Endothelial cell of umbilical vein (primary cell): ENCODE measurements at regions of chr15 and their contacts with region 1.

Region 1: GRCh38 chr15:40857601-40858341 is 13.9 kb downstream of the SPINT1 start:
- DNase-seq: peak; percentile 67
- H3K4me3 ChIP-seq: no peak overlapping the region
- H3K27ac ChIP-seq: no peak overlapping the region
- H3K4me1 ChIP-seq: no peaks in the 10 kb centered on the region
- H3K27me3 ChIP-seq: no peaks in the 10 kb centered on the region
- CTCF ChIP-seq: peak; percentile 92 to 99
- POLR2A ChIP-seq: no peak

Region 2: DNA sequence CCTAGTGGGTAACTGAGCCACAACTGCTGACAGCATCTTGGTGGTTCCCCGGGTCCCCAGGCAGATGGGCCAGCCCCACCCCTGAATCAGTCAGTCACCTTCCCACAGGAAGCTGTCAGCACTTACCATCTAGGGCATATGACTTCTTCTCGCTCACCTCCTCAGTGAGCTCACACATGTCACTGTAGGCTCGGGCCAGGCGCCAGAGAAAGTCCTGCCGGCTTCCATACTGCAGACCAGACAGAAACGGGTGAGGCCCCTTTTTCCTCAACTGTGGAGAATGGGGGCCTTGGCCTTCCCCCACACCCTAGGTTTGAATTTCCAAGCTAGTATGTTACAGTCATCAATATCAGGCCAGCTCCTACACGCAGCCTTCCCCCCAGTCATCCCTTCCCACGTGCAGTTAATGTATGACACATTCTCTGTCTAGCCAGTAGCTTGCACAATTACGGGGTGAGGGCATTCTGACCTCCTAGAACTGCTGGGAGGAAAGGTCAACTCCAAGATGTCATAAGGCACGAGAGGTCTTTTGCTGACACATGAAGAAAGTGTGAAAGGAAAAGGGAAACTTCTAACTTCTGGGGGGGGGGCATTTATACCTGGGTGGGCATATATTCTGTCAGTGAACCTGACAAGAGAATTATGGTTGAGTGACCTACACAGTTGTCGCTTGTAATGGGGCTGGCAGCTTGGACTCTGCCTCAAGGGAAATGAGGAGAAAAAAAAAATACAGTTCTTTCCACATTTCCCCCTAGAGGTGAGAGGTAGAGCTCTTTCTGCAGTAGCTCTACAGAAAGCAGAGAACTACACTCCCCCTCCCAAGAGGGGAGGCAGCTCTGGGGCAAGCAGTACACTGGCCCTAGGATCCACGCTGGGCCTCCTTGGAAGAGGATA is 113.6 kb before region 1 on chr15:
- CTCF ChIA-PET with region 1: interaction called, 27 read pairs
- POLR2A ChIA-PET with region 1: no interaction called
- dilution Hi-C with region 1: no loop called
- intact Hi-C with region 1: no loop called
- DNase-seq: no peak
- H3K4me3 ChIP-seq: no peak overlapping the region
- H3K27ac ChIP-seq: no peak overlapping the region
- H3K4me1 ChIP-seq: no peaks in the 10 kb centered on the region
- H3K27me3 ChIP-seq: no peaks in the 10 kb centered on the region
- CTCF ChIP-seq: no peak
- POLR2A ChIP-seq: no peak

Region 3: GRCh38 chr15:40825661-40826088 is 32.1 kb before region 1 on chr15:
- CTCF ChIA-PET with region 1: interaction called, 15 read pairs
- POLR2A ChIA-PET with region 1: no interaction called
- dilution Hi-C with region 1: no loop called
- intact Hi-C with region 1: no loop called
- DNase-seq: no peak
- H3K4me3 ChIP-seq: no peak overlapping the region
- H3K27ac ChIP-seq: no peak overlapping the region
- H3K4me1 ChIP-seq: no peaks in the 10 kb centered on the region
- H3K27me3 ChIP-seq: peaks cover 7 to 14% of the 10 kb centered on the region in 2 experiments
- CTCF ChIP-seq: no peak
- POLR2A ChIP-seq: no peak

Region 4: GRCh38 chr15:40847205-40847961 is 10.4 kb before region 1 on chr15:
- CTCF ChIA-PET with region 1: interaction called, 71 read pairs
- POLR2A ChIA-PET with region 1: no interaction called
- dilution Hi-C with region 1: no loop called
- intact Hi-C with region 1: no loop called
- DNase-seq: no peak
- H3K4me3 ChIP-seq: no peak overlapping the region
- H3K27ac ChIP-seq: no peak overlapping the region
- H3K4me1 ChIP-seq: peaks cover 5% of the 10 kb centered on the region
- H3K27me3 ChIP-seq: peaks cover 7 to 11% of the 10 kb centered on the region in 2 experiments
- CTCF ChIP-seq: no peak
- POLR2A ChIP-seq: no peak

Region 5: GRCh38 chr15:40881351-40881750 is 23.6 kb after region 1 on chr15:
- CTCF ChIA-PET with region 1: interaction called, 38 read pairs
- POLR2A ChIA-PET with region 1: no interaction called
- dilution Hi-C with region 1: no loop called
- intact Hi-C with region 1: no loop called
- DNase-seq: no peak
- H3K4me3 ChIP-seq: no peak overlapping the region
- H3K27ac ChIP-seq: no peak overlapping the region
- H3K4me1 ChIP-seq: no peaks in the 10 kb centered on the region
- H3K27me3 ChIP-seq: no peaks in the 10 kb centered on the region
- CTCF ChIP-seq: no peak
- POLR2A ChIP-seq: no peak

Region 6: DNA sequence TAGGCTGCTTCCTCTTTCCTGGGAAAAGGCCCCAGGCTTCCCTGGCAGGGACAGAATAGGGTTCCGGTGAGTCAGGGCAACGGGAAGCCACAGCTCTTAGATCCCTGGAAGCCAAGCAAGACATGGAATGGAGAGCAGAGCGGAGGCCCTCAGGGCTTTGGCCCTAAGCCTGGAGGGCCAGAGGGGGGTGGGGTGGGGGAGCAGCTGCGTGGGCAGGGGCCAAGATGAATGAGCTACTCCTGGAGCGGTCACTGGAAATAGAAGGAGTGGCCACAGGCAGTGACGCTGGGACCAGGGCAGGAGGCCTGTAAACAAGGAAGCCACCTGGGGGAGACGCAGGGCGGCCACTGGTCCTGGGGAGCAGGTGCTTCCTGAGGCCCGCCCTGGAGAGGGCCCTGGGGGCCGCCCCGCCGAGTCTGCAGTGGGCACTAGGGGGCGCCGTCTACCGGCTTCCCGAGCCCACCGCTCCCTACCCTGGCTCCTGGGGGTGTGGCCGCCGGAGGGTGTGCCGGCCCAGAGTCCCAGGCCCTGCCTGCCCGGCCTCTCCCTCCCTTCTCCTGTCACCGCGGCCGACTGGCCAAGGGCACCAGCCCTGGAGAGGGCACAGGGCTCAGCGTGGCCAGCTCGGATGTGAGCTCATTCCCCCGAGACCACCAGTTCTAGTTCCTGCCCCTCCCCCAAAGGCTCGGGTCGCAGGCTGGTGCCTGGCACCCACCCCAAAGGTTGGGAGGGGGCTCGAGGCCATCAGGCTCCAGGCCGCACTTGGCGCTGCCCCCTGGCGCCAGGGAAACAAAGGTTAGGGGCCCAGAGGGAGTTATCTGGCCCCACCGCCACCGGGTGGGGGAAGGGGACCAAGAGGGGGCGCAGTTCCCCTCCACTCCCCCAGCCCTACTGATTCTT is 48.6 kb after region 1 on chr15:
- CTCF ChIA-PET with region 1: interaction called, 10 read pairs
- POLR2A ChIA-PET with region 1: no interaction called
- dilution Hi-C with region 1: no loop called
- intact Hi-C with region 1: no loop called
- DNase-seq: peak; percentile 98
- H3K4me3 ChIP-seq: peak overlapping the region in 2 of 3 experiments; percentile 9 to 13
- H3K27ac ChIP-seq: peak overlapping the region; percentile 88
- H3K4me1 ChIP-seq: peaks cover 30% of the 10 kb centered on the region
- H3K27me3 ChIP-seq: no peaks in the 10 kb centered on the region
- CTCF ChIP-seq: peak; percentile 89 to 99
- POLR2A ChIP-seq: peak; percentile 67

Region 7: DNA sequence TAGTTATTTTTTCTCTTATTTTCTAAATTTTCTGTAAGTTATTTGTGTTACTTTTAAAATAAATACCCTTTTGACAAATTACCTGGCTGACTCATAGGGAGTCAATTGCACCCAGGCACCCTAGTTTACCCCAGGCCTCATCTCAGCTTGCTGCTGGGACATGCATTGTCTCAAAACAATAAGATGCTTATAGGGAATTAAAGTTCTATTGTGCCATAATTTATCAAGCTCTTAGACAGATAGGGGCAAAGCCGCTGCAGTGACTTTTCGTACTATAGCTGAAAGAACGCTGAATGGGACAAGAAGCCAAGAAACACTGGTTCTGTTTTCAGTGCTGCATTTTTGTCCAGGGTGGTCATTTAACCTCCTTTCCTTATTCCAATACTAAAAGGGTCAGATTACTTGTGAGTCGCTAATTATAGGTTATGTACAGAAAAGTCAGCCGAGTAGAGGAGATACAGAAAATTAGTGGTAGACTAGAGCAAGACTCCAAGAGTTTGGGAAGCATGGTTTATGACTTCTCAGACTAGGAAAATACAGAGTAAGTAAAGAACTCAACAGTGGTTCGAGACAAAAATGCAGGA is 322.5 kb after region 1 on chr15:
- CTCF ChIA-PET with region 1: interaction called, 68 read pairs
- POLR2A ChIA-PET with region 1: no interaction called
- dilution Hi-C with region 1: no loop called
- intact Hi-C with region 1: loop called (anchors 1 kb)
- DNase-seq: no peak
- H3K4me3 ChIP-seq: no peak overlapping the region
- H3K27ac ChIP-seq: no peak overlapping the region
- H3K4me1 ChIP-seq: no peaks in the 10 kb centered on the region
- H3K27me3 ChIP-seq: no peaks in the 10 kb centered on the region
- CTCF ChIP-seq: no peak
- POLR2A ChIP-seq: no peak